Posterior cingulate gyrus (tissue), 11 donors: ENCODE measurements at regions of chr11 and their contacts with region 1.

Region 1: DNA sequence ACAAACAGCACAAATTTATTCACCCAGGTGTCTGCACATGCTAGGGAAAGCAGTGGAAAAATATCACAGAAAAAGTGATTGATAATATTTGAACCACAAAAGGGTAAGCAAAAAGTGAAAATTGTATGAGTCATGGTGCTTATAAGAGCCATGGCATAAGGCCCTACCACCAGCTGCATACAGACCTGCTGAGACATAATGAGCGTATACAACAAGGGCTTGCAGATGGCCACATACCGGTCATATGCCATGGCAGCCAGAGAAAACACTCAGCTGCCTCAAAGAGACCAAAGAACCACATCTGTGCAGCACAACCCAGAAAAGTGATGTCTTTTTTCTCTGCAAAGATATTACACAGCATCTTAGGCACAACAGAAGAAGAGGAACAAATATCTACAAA is 71.4 kb upstream of the OR9G4 start:
- DNase-seq: no peak

Region 2: DNA sequence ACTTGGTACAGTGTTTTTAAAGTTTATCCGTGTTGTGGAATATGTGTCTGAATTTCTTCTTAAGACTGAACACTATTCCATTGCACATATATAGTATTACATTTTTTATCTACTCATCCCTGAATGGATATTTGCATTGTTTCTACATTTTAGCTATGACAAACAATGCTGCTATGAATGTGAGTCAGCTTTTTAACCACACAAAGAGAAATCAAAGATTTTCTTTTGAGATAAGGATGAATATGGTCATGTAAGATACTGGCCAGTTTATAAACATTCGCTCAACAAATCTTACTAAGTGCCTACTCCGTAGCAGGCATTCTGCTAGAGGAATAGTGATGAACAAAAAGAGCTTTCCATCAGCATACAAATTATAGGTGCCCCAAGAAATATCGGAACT is 54.9 kb before region 1 on chr11:
- intact Hi-C with region 1: loop called (anchors 10 kb)
- DNase-seq: no peak